ENCODE measurements at regions of chr4 and their contacts with region 1.

Region 1: GRCh38 chr4:107736924-107737448 is 17.0 kb upstream of the PAPSS1 start:
- DNase-seq: peak; percentile 42 to 50 (median 46)
- H3K4me3 ChIP-seq: no peak overlapping the region
- H3K4me3 Mint-ChIP-seq: no peak overlapping the region
- H3K27ac ChIP-seq: no peak overlapping the region
- H3K27ac Mint-ChIP-seq: peak overlapping the region in 2 of 7 donors; percentile 43 to 69
- H3K4me1 ChIP-seq: no peaks in the 10 kb centered on the region
- H3K4me1 Mint-ChIP-seq: no peaks in the 10 kb centered on the region
- H3K27me3 ChIP-seq: no peaks in the 10 kb centered on the region
- H3K27me3 Mint-ChIP-seq: no peaks in the 10 kb centered on the region

Region 2: DNA sequence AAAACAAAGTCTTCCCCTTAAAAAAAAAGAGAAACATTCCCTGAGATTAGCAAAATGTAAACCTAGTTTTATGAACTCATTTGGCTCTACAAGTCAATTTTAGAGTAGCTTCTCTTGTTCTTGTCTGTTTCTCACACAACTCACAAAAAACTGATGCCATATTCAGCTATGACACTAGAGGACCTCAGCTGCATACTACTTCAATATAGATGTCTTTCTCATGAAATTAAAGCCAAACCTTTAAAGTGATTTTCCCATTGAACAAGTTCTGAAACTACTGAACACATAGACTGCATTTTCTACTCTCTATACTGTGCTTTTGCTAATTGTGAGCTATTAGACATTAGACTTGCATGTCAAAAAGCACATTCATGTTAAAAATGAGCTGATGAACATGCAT is 1470.8 kb before region 1 on chr4:
- CTCF ChIA-PET with region 1: interaction called, 3 read pairs
- POLR2A ChIA-PET with region 1: no interaction called
- intact Hi-C with region 1: loop called (anchors 2 kb)
- DNase-seq: peak in 1 of 5 donors; percentile 0
- H3K4me3 ChIP-seq: no peak overlapping the region
- H3K4me3 Mint-ChIP-seq: no peak overlapping the region
- H3K27ac ChIP-seq: no peak overlapping the region
- H3K27ac Mint-ChIP-seq: peak overlapping the region in 2 of 7 donors; percentile 29 to 37
- H3K4me1 ChIP-seq: no peaks in the 10 kb centered on the region
- H3K4me1 Mint-ChIP-seq: peaks cover 0 to 9% (median 2%) of the 10 kb centered on the region in 4 donors
- H3K27me3 ChIP-seq: no peaks in the 10 kb centered on the region
- H3K27me3 Mint-ChIP-seq: no peaks in the 10 kb centered on the region

Region 3: DNA sequence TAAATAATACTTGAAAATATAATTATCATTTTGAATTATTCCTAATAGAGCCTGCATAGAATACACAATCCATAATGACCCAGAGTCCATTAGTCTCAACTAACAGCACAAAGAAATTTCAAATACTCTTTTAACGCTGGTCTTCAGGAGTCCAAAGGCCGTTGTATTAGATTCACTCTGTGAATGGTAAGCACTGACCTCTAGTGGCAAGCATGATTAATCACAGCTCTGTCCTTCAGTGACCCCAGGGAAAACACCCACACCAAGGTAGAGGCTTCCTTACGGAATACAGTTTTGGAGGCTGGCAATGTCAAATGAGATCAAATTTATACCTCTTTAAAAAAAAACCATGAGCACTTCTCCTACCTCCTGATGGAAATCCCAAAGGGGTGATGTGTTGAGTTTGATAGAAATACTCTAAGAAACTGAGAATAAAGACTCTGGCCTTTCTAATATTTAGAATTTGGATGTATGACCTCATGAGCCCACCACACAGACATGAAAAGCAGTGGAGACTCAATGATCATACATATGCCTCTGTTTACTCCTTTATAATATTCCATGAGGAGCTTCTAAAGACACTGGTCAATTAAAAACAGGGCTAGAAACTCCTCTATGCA is 553.7 kb before region 1 on chr4:
- CTCF ChIA-PET with region 1: interaction called, 3 read pairs
- POLR2A ChIA-PET with region 1: no interaction called
- intact Hi-C with region 1: loop called (anchors 10 kb)
- DNase-seq: peak in 4 of 5 donors; percentile 7 to 23 (median 10)
- H3K4me3 ChIP-seq: no peak overlapping the region
- H3K4me3 Mint-ChIP-seq: no peak overlapping the region
- H3K27ac ChIP-seq: no peak overlapping the region
- H3K27ac Mint-ChIP-seq: no peak overlapping the region
- H3K4me1 ChIP-seq: no peaks in the 10 kb centered on the region
- H3K4me1 Mint-ChIP-seq: no peaks in the 10 kb centered on the region
- H3K27me3 ChIP-seq: no peaks in the 10 kb centered on the region
- H3K27me3 Mint-ChIP-seq: peaks cover 0 to 4% of the 10 kb centered on the region in 2 donors

Region 4: DNA sequence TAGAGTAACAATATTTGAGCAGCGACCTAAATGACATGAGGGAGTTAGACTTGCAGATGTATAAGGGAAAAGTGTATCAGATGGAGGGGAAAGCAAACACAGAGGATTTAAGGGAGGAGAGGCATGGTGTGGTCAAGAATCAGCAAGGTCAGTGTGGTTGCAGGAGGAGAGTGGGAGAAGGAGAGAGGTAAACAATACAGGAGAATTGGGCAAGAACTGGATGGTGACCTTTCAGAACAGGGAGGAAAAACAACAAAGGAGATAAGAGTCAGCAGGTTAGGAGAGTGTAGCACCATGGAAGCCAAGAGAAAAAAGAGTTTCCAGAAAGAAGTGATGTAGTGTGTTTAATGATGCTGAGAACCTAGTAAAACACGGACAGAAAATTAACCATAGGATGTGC is 195.5 kb before region 1 on chr4:
- CTCF ChIA-PET with region 1: no interaction called
- POLR2A ChIA-PET with region 1: no interaction called
- intact Hi-C with region 1: no loop called
- DNase-seq: no peak
- H3K4me3 ChIP-seq: no peak overlapping the region
- H3K4me3 Mint-ChIP-seq: no peak overlapping the region
- H3K27ac ChIP-seq: no peak overlapping the region
- H3K27ac Mint-ChIP-seq: no peak overlapping the region
- H3K4me1 ChIP-seq: no peaks in the 10 kb centered on the region
- H3K4me1 Mint-ChIP-seq: no peaks in the 10 kb centered on the region
- H3K27me3 ChIP-seq: no peaks in the 10 kb centered on the region
- H3K27me3 Mint-ChIP-seq: peaks cover 3 to 4% of the 10 kb centered on the region in 2 donors

Region 5: DNA sequence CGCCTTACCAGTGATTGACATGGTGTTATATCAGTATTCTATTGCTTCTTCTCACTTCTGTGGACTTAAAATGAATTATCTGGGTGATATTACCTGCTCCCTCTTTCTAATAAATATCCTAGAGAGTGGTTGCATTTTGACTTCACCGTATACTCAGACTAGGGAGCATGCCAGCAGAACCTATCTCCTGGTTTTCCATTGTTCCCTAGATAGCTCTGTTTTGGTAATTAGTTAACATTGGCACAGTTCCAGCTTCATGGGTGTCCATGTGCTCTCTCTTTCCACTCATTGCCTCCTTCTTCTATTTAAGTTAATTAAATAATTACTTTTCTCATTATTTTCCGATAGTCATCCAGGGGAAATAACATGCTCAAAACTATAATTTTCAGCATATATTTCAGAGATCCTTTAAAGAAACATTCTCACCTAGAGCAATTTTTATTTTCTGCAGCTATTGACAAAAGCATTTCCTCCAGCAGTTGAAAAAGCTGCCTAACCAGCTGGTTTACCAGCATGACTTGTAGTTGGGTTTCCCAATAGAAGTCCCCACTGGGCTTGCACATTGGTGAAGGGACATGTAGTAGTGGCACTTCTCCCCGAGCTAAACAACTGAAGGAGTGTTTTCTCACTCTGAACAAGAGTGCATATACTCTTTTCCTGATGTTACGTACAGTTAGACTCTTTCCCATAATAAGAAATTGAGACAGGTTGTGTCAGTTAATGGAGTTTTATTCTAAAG is 10.9 kb after region 1 on chr4:
- CTCF ChIA-PET with region 1: interaction called, 23 read pairs
- POLR2A ChIA-PET with region 1: no interaction called
- intact Hi-C with region 1: no loop called
- DNase-seq: no peak
- H3K4me3 ChIP-seq: no peak overlapping the region
- H3K4me3 Mint-ChIP-seq: no peak overlapping the region
- H3K27ac ChIP-seq: no peak overlapping the region
- H3K27ac Mint-ChIP-seq: no peak overlapping the region
- H3K4me1 ChIP-seq: no peaks in the 10 kb centered on the region
- H3K4me1 Mint-ChIP-seq: no peaks in the 10 kb centered on the region
- H3K27me3 ChIP-seq: no peaks in the 10 kb centered on the region
- H3K27me3 Mint-ChIP-seq: peaks cover 22 to 26% of the 10 kb centered on the region in 2 donors

Region 6: GRCh38 chr4:107780665-107781064 is 43.7 kb after region 1 on chr4:
- CTCF ChIA-PET with region 1: no interaction called
- POLR2A ChIA-PET with region 1: no interaction called
- intact Hi-C with region 1: no loop called
- DNase-seq: peak in 1 of 5 donors; percentile 3
- H3K4me3 ChIP-seq: no peak overlapping the region
- H3K4me3 Mint-ChIP-seq: no peak overlapping the region
- H3K27ac ChIP-seq: no peak overlapping the region
- H3K27ac Mint-ChIP-seq: no peak overlapping the region
- H3K4me1 ChIP-seq: no peaks in the 10 kb centered on the region
- H3K4me1 Mint-ChIP-seq: no peaks in the 10 kb centered on the region
- H3K27me3 ChIP-seq: no peaks in the 10 kb centered on the region
- H3K27me3 Mint-ChIP-seq: peaks cover 6 to 12% of the 10 kb centered on the region in 2 donors